ENCODE measurements at regions of chr6 and their contacts with region 1.

Region 1: GRCh38 chr6:108848116-108848868 is at the start of gene ARMC2:
- DNase-seq: peak; percentile 88 to 90
- H3K4me3 ChIP-seq: peak within 1 kb of the TSS; percentile 21 to 83 (median 68)
- H3K27ac ChIP-seq: peak within 1 kb of the TSS; percentile 52 to 65 (median 60)
- H3K4me1 ChIP-seq: peaks cover 0 to 10% of the 10 kb centered on the region in 2 donors
- H3K27me3 ChIP-seq: no peaks in the 10 kb centered on the region
- CTCF ChIP-seq: no peak
- POLR2A ChIP-seq: peak in 1 of 2 donors; percentile 84
- total RNA-seq, gene ARMC2: 5.2 to 9.3 (median 6.9) TPM

Region 2: DNA sequence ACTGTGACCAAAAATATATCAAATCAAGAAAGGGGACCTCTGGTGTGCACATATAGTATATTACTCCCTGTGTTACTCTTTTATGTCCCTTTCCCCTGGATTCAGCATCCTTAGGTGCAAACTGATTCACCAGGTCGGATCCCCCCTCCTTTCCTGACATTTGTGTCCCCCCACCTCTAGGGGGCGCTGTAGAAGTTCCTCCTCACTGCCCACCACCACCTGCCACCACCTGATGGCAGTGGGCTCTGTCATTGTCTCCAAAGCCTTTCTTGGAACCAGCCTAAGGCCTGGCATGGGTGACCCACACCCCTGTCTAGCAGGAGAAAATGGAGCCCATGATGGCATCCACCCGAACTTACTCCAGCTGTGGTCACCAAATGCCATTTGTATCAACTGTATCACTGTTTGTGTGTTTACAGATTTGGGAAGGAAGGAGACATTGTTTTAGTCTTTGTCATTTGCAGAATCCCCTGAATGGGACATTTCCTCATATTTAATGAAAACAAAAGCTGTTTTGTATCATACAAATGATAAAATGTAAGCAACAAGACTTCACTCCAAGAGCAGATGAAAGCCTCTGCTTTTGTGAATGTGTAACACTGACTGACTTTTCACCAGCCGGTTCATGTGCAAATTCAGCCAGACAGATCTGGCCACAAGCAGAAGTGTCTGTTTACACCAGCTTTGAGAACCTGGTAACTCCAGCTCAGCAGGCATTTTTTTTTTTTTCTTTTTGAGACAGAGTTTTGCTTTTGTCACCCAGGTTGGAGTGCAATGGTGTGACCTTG is 66.1 kb after region 1 on chr6:
- intact Hi-C with region 1: no loop called
- DNase-seq: no peak
- H3K4me3 ChIP-seq: no peak overlapping the region
- H3K27ac ChIP-seq: no peak overlapping the region
- H3K4me1 ChIP-seq: no peaks in the 10 kb centered on the region
- H3K27me3 ChIP-seq: no peaks in the 10 kb centered on the region
- CTCF ChIP-seq: peak in 2 of 6 experiments; percentile 11 to 24
- POLR2A ChIP-seq: no peak

Region 3: DNA sequence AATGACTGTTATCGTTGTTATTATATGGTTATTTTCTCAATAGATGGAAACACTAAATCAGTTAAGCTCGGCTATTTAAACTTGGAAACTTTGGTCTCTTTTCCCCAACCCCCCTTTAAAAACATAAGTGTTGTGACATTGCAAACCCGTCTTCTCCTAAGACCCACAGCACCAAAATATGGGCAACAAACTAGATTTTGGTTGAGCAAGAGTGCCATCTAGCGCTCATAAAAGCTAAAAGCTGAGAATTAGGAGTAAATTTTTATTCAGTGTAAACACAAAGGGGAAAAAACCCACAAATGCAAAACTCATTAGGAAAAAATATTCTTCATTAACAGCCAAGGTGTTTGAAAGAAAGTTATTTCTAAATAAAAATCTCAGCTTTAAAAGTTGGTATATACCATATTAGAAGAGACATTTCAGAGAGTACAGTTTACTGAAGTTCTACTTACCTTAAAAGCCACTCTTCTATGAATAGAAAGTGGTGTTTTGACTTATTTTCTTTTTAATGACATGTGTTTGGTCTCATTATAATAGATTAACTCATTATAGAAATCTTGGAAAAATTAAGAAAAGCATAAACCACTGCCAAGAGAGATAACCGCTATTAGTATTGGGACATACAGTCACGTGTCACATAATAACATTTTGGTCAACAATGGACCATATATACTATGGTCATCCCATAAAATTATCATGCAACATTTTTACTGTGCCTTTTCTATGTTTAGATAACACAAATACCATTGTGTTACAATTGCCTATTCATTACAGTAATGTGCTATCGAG is 225.2 kb after region 1 on chr6:
- intact Hi-C with region 1: loop called (anchors 10 kb)
- DNase-seq: peak; percentile 14 to 17
- H3K4me3 ChIP-seq: no peak overlapping the region
- H3K27ac ChIP-seq: no peak overlapping the region
- H3K4me1 ChIP-seq: peaks cover 9 to 20% of the 10 kb centered on the region in 2 donors
- H3K27me3 ChIP-seq: no peaks in the 10 kb centered on the region
- CTCF ChIP-seq: peak in 5 of 6 experiments; percentile 60 to 80 (median 71)
- POLR2A ChIP-seq: no peak

Measured in thyroid gland (tissue), 4 donors.